Naive thymus-derived CD4-positive, alpha-beta T cell (primary cell): ENCODE measurements at regions of chr22 and their contacts with region 1.

Region 1: GRCh38 chr22:38872172-38872830 is at the start of gene CBX6:
- DNase-seq: peak; percentile 90 to 98 (median 95)
- ATAC-seq: peak; percentile 89
- H3K4me3 ChIP-seq: peak within 1 kb of the TSS; percentile 98
- H3K4me3 Mint-ChIP-seq: peak within 1 kb of the TSS; percentile 88 to 97 (median 93)
- H3K27ac ChIP-seq: peak within 1 kb of the TSS; percentile 73
- H3K27ac Mint-ChIP-seq: peak within 1 kb of the TSS; percentile 81 to 93 (median 89)
- H3K4me1 ChIP-seq: peaks cover 28 to 34% of the 10 kb centered on the region in 2 donors
- H3K4me1 Mint-ChIP-seq: peaks cover 35 to 55% (median 49%) of the 10 kb centered on the region in 7 donors
- H3K27me3 ChIP-seq: no peaks in the 10 kb centered on the region
- H3K27me3 Mint-ChIP-seq: peaks cover 0 to 18% (median 0%) of the 10 kb centered on the region in 5 donors
- total RNA-seq, gene CBX6: 41.7 to 77.0 (median 73.4) TPM

Region 2: DNA sequence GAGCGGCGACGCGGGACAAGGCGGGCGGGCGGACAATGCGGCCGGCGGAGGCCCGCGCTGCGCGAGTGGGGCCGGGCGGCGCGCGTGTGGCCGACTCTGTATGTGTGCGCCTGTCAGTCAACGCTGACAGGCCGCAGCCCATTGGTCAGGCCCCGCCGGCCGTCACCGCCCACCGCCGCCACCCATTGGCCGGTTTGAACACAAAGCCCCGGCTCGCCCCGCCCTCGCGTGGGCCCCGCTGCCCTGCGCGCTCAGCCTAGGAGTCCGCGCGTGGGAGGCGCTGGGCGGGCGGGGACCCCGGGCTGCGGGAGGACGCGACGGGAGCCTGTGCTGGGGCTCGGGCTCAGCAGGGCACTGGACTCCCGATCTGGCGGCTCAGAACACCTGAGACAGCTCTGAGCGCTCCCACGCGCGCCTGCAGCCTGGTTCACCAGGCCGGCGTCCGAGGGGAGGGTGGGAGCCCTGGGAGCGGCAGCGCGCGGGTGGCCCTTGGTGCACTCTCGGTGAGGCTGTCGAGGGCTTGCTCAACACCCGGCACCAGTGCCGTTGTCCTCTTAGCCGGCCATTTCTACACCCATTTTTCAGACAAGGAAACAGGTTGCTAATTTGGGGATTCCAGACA is 116.3 kb before region 1 on chr22 and contains the start of gene SUN2:
- CTCF ChIA-PET with region 1: no interaction called
- POLR2A ChIA-PET with region 1: interaction called, 8 read pairs
- intact Hi-C with region 1: loop called in 1 of 2 experiments (anchors 2 kb)
- DNase-seq: peak; percentile 89 to 98 (median 92)
- ATAC-seq: peak; percentile 85
- H3K4me3 ChIP-seq: peak within 1 kb of the TSS; percentile 95
- H3K4me3 Mint-ChIP-seq: peak within 1 kb of the TSS; percentile 95 to 99 (median 96)
- H3K27ac ChIP-seq: peak within 1 kb of the TSS; percentile 81
- H3K27ac Mint-ChIP-seq: peak within 1 kb of the TSS; percentile 89 to 100 (median 99)
- H3K4me1 ChIP-seq: peaks cover 48 to 54% of the 10 kb centered on the region in 2 donors
- H3K4me1 Mint-ChIP-seq: peaks cover 42 to 67% (median 62%) of the 10 kb centered on the region in 7 donors
- H3K27me3 ChIP-seq: no peaks in the 10 kb centered on the region
- H3K27me3 Mint-ChIP-seq: no peaks in the 10 kb centered on the region
- total RNA-seq, gene SUN2: 509 to 977 (median 558) TPM

Region 3: DNA sequence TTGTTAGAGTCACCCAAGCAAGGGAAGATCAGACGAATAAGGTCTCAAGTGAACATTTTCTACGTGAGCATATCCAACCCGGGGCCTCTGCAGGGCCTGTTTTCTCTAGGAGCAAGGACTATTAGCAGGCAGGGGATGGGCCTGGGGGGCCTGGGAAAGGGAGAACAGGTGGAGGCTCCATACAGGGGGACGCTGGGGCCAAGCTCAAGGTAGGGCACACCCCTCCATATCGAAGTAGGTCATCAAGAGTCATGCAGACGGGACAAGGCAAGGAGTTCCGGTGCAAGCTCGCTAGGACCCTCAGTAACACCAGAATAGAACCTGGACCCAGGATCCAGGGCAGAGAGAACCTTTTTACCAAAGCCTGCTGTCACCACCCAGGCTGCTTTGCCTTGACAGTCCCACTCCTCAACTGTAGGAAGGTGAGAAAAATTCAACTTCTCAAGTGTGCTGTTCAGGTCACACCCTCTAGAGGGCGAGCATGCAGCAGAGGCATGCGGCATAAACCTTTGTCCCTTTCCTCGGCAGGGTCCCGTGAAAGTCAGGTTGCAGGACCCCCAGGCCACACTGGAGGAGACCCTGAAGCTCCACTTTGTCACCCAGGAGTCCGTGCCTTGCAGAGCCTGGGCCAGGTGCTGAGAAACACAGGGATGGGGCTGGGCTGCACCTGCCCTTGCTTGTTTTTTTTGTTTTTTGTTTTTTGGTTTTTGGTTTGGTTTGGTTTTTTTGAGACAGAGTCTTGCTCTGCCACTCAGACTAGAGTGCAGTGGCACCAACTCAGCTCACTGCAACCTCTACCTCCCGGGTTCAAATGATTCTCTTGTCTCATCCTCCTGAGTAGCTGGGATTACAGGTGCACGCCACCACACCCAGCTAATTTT is 101.2 kb after region 1 on chr22:
- CTCF ChIA-PET with region 1: interaction called, 9 read pairs
- POLR2A ChIA-PET with region 1: interaction called, 5 read pairs
- intact Hi-C with region 1: loop called in 1 of 2 experiments (anchors 1 kb)
- DNase-seq: peak in 7 of 9 donors; percentile 20 to 54 (median 42)
- ATAC-seq: peak; percentile 86
- H3K4me3 ChIP-seq: no peak overlapping the region
- H3K4me3 Mint-ChIP-seq: no peak overlapping the region
- H3K27ac ChIP-seq: no peak overlapping the region
- H3K27ac Mint-ChIP-seq: peak overlapping the region in 1 of 9 donors; percentile 46
- H3K4me1 ChIP-seq: no peaks in the 10 kb centered on the region
- H3K4me1 Mint-ChIP-seq: peaks cover 0 to 22% (median 0%) of the 10 kb centered on the region in 7 donors
- H3K27me3 ChIP-seq: no peaks in the 10 kb centered on the region
- H3K27me3 Mint-ChIP-seq: peaks cover 0 to 21% (median 11%) of the 10 kb centered on the region in 5 donors

Region 4: DNA sequence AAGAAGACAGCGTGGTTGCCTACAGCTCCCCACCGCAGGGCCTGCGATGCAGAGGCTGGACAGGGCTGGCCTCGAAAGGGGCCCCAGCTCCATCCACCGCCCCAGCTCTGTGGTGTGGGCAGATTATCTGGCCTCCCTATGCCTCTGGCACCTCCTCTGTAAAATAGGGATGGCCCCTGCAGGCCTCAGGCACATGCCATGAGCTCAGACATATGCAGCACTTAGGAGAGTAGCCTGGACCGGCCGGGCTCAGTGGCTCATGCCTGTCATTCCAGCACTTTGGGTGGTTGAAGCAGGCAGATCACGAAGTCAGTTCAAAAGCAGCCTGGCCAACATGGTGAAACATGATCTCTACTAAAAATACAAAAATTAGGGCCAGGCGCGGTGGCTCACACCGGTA is 156.0 kb after region 1 on chr22:
- CTCF ChIA-PET with region 1: interaction called, 10 read pairs
- POLR2A ChIA-PET with region 1: no interaction called
- intact Hi-C with region 1: no loop called
- DNase-seq: no peak
- ATAC-seq: no peak
- H3K4me3 ChIP-seq: no peak overlapping the region
- H3K4me3 Mint-ChIP-seq: no peak overlapping the region
- H3K27ac ChIP-seq: no peak overlapping the region
- H3K27ac Mint-ChIP-seq: peak overlapping the region in 3 of 9 donors; percentile 34 to 58 (median 54)
- H3K4me1 ChIP-seq: peaks cover 13 to 18% of the 10 kb centered on the region in 2 donors
- H3K4me1 Mint-ChIP-seq: peaks cover 11 to 44% (median 32%) of the 10 kb centered on the region in 7 donors
- H3K27me3 ChIP-seq: no peaks in the 10 kb centered on the region
- H3K27me3 Mint-ChIP-seq: no peaks in the 10 kb centered on the region

Region 5: DNA sequence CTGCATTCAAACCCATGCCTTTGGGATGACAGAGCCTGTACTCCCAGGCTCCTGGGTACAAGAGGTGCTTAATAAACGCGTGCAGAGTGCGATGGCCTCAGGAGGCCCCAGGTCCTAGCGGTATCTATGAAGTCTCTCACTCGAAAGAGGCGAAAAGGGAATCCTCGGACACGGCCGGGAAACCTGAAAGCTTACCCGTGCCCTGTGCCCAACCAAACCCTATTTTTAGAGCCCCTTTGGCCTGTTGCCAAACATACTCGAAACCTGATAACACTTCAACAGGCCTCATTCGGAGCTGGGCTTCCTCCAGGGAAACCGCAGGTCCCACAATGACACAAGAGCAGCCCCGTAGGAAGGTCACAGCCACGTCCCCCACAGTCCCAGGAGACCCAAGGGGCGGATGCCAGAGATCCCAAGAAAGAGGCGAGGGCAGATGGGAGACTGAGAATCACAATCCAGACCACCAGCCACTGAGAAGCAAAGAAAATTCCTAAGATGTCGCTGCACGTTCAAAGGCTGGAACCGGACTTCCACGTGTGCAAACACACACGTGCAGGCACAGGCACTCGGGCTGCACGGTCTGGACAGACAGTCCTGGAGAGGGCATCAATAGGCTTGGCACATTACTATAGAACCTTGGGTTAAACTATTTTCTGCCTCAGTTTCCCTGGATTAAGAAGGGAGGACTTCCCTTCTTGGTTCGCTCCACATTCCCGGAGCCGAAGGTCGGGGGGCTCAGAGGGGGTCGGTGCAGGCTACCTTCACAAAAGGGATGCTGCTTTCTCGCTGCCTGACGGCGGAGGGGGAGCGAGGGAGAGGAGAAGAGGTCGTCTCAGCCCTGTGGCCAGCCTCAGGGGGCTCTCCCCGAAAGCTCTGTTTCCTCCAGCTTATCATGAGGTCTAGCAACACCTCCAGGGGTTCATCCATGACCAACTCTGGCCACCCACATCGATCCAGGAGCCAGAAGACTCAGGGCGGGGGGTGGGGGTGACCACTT is 364.3 kb after region 1 on chr22:
- CTCF ChIA-PET with region 1: no interaction called
- POLR2A ChIA-PET with region 1: interaction called, 3 read pairs
- intact Hi-C with region 1: loop called in 1 of 2 experiments (anchors 2 kb)
- DNase-seq: peak in 7 of 9 donors; percentile 27 to 55 (median 49)
- ATAC-seq: peak; percentile 52
- H3K4me3 ChIP-seq: peak overlapping the region; percentile 14
- H3K4me3 Mint-ChIP-seq: peak overlapping the region; percentile 67 to 84 (median 79)
- H3K27ac ChIP-seq: no peak overlapping the region
- H3K27ac Mint-ChIP-seq: peak overlapping the region in 6 of 9 donors; percentile 31 to 89 (median 65)
- H3K4me1 ChIP-seq: peaks cover 54 to 66% of the 10 kb centered on the region in 2 donors
- H3K4me1 Mint-ChIP-seq: peaks cover 43 to 75% (median 67%) of the 10 kb centered on the region in 7 donors
- H3K27me3 ChIP-seq: peaks cover 0 to 8% of the 10 kb centered on the region in 2 donors
- H3K27me3 Mint-ChIP-seq: peaks cover 0 to 80% (median 38%) of the 10 kb centered on the region in 5 donors